ENCODE measurements at regions of chr3 and their contacts with region 1.

Region 1: DNA sequence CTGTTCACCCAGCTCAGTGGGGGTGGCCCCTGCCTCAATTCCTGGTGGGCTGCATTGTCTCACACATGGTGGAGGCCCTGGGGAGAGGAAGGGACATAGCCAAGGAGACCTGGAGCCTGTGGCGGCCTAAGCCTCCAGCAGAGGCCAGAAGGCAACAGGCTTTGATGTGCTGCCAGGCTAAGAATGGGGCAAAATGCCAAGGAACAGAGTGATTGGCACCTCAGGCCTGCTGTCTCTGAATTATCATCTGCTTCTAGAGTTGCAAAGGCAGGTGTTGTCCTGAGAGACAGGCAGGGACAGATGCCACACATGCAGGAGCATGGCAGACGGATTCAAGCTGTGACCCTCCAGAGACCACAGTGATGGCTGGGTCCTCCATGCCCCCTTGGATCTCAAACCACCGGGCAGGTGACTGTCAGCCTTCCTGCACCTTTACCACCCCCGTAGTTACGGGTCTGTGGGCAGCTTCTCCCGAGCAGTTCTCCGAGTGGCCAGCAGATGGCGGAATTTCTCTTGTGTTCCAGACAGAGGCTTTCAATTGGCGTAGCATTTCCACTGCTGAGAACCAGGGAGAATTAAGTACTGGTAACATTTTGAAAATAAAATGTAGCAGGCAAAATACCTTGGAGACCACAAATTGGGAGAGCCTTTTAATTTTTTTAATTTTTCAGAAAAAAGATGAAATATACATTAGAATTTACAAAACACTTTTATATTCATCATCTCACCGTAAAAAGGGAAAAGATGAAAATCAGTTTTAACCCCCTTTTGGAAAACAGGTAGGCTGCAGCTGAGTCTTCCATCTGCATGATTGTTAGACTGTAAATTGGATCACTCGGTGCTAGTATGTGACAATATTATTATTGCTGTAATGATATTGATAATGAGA is 525.5 kb upstream of the CFAP20DC start:
- DNase-seq: peak; percentile 90
- ATAC-seq: peak; percentile 74
- H3K4me3 Mint-ChIP-seq: no peak overlapping the region
- H3K27ac Mint-ChIP-seq: no peak overlapping the region
- H3K4me1 Mint-ChIP-seq: peaks cover 12% of the 10 kb centered on the region
- H3K27me3 Mint-ChIP-seq: no peaks in the 10 kb centered on the region

Region 2: GRCh38 chr3:59313365-59313764 is 262.0 kb before region 1 on chr3:
- CTCF ChIA-PET with region 1: interaction called, 11 read pairs
- POLR2A ChIA-PET with region 1: no interaction called
- DNase-seq: peak; percentile 46
- ATAC-seq: no peak
- H3K4me3 Mint-ChIP-seq: no peak overlapping the region
- H3K27ac Mint-ChIP-seq: no peak overlapping the region
- H3K4me1 Mint-ChIP-seq: no peaks in the 10 kb centered on the region
- H3K27me3 Mint-ChIP-seq: no peaks in the 10 kb centered on the region

Region 3: DNA sequence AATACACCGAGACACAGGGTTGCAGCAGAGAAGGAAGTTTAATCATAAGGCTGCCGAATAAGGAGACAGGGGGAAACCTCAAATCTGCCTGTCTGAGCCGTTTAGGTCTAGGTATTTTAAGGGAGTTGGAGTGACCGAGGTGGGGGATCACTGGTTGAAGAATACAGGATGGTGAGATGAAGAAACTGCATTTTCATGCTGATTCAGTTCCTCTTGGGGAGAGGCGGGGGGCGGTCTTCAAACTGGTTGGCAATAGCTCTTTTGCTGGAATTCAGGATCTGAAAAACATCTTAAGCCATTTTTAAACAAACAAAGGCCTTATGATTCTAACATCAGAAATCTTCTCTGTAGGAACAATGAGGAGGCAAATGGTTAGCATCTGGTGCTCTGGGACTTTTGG is 173.9 kb after region 1 on chr3:
- CTCF ChIA-PET with region 1: no interaction called
- POLR2A ChIA-PET with region 1: no interaction called
- DNase-seq: no peak
- ATAC-seq: no peak
- H3K4me3 Mint-ChIP-seq: no peak overlapping the region
- H3K27ac Mint-ChIP-seq: no peak overlapping the region
- H3K4me1 Mint-ChIP-seq: peaks cover 37% of the 10 kb centered on the region
- H3K27me3 Mint-ChIP-seq: no peaks in the 10 kb centered on the region

Region 4: GRCh38 chr3:59809710-59810444 is 234.5 kb after region 1 on chr3:
- CTCF ChIA-PET with region 1: interaction called, 41 read pairs
- POLR2A ChIA-PET with region 1: no interaction called
- DNase-seq: no peak
- ATAC-seq: peak; percentile 19
- H3K4me3 Mint-ChIP-seq: no peak overlapping the region
- H3K27ac Mint-ChIP-seq: peak overlapping the region; percentile 22
- H3K4me1 Mint-ChIP-seq: peaks cover 10% of the 10 kb centered on the region
- H3K27me3 Mint-ChIP-seq: no peaks in the 10 kb centered on the region